ENCODE measurements at regions of chr13 and their contacts with region 1.

Region 1: DNA sequence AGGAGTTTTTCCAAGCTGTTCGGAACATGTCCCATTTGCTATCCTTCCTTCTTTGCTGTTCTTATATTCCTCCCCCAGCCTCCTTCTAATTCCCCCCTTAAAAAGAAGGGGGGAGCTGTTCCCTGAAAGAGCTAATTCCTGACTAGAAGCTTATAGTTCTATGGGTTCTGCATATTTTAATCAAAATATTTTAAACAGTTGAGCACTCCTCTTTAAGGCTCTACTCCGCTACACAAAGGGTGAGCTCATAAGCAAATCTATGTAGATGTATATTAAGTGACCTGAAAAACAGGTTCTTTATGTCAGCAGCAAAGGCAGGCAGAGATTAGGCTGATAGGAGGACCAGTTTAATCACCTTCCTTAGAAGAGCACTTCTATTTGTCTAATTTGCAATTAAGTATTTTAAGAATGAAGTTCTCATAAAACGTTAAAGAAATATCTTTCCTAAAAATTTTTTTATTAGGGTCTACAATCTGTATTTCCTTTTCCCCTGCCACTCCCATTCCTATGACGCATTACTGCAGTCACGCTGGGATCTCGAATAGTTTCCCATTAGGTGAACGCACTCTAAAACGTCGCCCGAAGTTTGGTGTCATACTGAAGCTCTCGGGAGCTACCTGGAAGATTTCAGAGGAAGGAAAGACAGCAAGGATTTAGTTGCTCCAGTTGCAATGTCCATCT is 5.2 kb downstream of the EFNB2 start:
- DNase-seq: no peak
- ATAC-seq: no peak
- H3K4me3 ChIP-seq: no peak overlapping the region
- H3K27ac ChIP-seq: no peak overlapping the region
- H3K4me1 ChIP-seq: no peaks in the 10 kb centered on the region
- H3K27me3 ChIP-seq: peaks cover 0 to 17% of the 10 kb centered on the region in 2 experiments; a peak in 2 of 4 replicates
- CTCF ChIP-seq: no peak
- EP300 ChIP-seq: no peak
- POLR2A ChIP-seq: no peak
- RAD21 ChIP-seq: no peak

Region 2: GRCh38 chr13:106513025-106513983 is 17.0 kb before region 1 on chr13:
- CTCF ChIA-PET with region 1: interaction called, 6 read pairs
- POLR2A ChIA-PET with region 1: interaction called, 3 read pairs
- RAD21 ChIA-PET with region 1: interaction called, 3 read pairs
- SMC1A ChIA-PET with region 1: interaction called, 10 read pairs
- in situ Hi-C with region 1: no loop called
- intact Hi-C with region 1: no loop called
- DNase-seq: no peak
- ATAC-seq: peak; percentile 38
- H3K4me3 ChIP-seq: no peak overlapping the region
- H3K27ac ChIP-seq: no peak overlapping the region
- H3K4me1 ChIP-seq: no peaks in the 10 kb centered on the region
- H3K27me3 ChIP-seq: no peaks in the 10 kb centered on the region
- CTCF ChIP-seq: no peak
- EP300 ChIP-seq: no peak
- POLR2A ChIP-seq: no peak
- RAD21 ChIP-seq: no peak

Measured in GM12878 (cell line).